MCF 10A (cell line): ENCODE measurements at regions of chr15 and their contacts with region 1.

Region 1: DNA sequence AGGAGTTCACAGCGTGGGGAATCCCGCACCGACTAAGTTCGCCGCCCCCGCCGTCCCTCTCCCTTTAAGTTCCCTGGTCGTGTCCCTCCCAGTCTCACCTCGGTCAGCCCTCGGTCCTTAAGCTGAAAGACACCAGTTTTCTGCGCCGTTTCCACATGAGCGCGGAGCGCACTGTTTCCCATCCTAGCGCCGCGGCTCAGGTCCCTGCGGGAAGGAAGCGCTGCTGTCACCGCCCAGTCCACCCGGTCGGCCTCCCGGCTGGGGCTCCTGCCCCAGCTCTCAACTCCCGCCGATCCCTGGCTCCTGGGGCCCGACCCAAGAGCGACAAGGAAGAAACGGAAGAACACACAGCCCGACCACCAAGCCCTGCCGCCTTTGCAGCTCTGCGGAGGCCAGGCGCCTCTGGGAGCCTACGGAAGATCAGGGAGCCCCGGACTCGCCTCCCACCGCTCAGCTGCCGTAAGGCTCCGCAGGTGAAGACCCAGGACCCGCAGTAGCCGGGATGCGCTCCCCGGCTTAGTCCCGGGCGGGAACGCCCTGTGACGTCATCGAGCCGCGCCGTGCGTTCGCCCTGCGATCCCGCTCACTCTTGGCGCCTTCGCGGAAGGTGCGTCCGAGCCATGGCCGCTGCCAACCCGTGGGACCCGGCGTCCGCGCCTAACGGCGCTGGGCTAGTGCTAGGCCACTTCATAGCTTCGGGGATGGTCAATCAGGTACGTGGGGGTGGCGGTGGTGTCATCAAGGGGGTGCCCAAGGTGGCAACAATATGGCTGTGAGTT is at the starts of genes HAUS2 and LRRC57:
- DNase-seq: peak; percentile 86
- H3K4me3 Mint-ChIP-seq: peak within 1 kb of the TSS; percentile 88
- H3K27ac Mint-ChIP-seq: peak within 1 kb of the TSS; percentile 96
- H3K4me1 Mint-ChIP-seq: peaks cover 34% of the 10 kb centered on the region
- H3K27me3 Mint-ChIP-seq: no peaks in the 10 kb centered on the region
- CTCF ChIP-seq: no peak
- total RNA-seq, gene HAUS2: 22.6 and 29.6 TPM in 2 replicates
- total RNA-seq, gene LRRC57: 18.3 and 24.7 TPM in 2 replicates

Region 2: DNA sequence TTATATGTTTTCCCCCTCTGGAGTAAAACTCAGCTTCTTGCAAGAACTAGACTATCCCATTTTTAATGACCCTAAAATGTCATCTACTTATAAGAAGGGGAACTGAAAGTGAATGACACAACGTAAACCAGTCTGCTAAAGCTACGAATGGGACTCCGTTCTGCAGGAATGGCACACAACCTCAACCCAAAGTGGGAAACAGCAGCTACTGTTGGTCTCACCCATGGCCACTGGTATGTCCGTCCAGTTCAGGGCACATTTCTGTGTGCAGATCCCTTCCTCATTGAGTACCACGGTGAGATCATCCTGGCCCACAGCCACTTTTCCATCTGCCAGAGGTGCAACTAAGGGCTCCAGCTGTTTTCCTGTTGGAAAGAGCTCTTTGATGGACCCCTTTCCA is 364.1 kb before region 1 on chr15:
- CTCF ChIA-PET with region 1: no interaction called
- POLR2A ChIA-PET with region 1: no interaction called
- intact Hi-C with region 1: no loop called
- DNase-seq: no peak
- H3K4me3 Mint-ChIP-seq: no peak overlapping the region
- H3K27ac Mint-ChIP-seq: no peak overlapping the region
- H3K4me1 Mint-ChIP-seq: no peaks in the 10 kb centered on the region
- H3K27me3 Mint-ChIP-seq: no peaks in the 10 kb centered on the region
- CTCF ChIP-seq: no peak

Region 3: GRCh38 chr15:42511010-42511396 is 37.4 kb before region 1 on chr15:
- CTCF ChIA-PET with region 1: no interaction called
- POLR2A ChIA-PET with region 1: interaction called, 14 read pairs
- intact Hi-C with region 1: no loop called
- DNase-seq: peak; percentile 45
- H3K4me3 Mint-ChIP-seq: no peak overlapping the region
- H3K27ac Mint-ChIP-seq: peak overlapping the region; percentile 82
- H3K4me1 Mint-ChIP-seq: peaks cover 6% of the 10 kb centered on the region
- H3K27me3 Mint-ChIP-seq: no peaks in the 10 kb centered on the region
- CTCF ChIP-seq: no peak

Region 4: GRCh38 chr15:42533246-42533645 is 15.2 kb before region 1 on chr15:
- CTCF ChIA-PET with region 1: interaction called, 3 read pairs
- POLR2A ChIA-PET with region 1: interaction called, 21 read pairs
- intact Hi-C with region 1: no loop called
- DNase-seq: no peak
- H3K4me3 Mint-ChIP-seq: no peak overlapping the region
- H3K27ac Mint-ChIP-seq: no peak overlapping the region
- H3K4me1 Mint-ChIP-seq: no peaks in the 10 kb centered on the region
- H3K27me3 Mint-ChIP-seq: no peaks in the 10 kb centered on the region
- CTCF ChIP-seq: no peak

Region 5: GRCh38 chr15:42575188-42576039 is 27.0 kb after region 1 on chr15 and contains the start of gene STARD9:
- CTCF ChIA-PET with region 1: interaction called, 4 read pairs
- POLR2A ChIA-PET with region 1: interaction called, 27 read pairs
- intact Hi-C with region 1: no loop called
- DNase-seq: peak; percentile 98
- H3K4me3 Mint-ChIP-seq: peak within 1 kb of the TSS; percentile 89
- H3K27ac Mint-ChIP-seq: peak within 1 kb of the TSS; percentile 53
- H3K4me1 Mint-ChIP-seq: peaks cover 7% of the 10 kb centered on the region
- H3K27me3 Mint-ChIP-seq: no peaks in the 10 kb centered on the region
- CTCF ChIP-seq: no peak
- total RNA-seq, gene STARD9: 2.0 and 2.9 TPM in 2 replicates

Region 6: GRCh38 chr15:42581272-42581730 is 32.9 kb after region 1 on chr15:
- CTCF ChIA-PET with region 1: interaction called, 3 read pairs
- POLR2A ChIA-PET with region 1: interaction called, 12 read pairs
- intact Hi-C with region 1: no loop called
- DNase-seq: peak; percentile 70
- H3K4me3 Mint-ChIP-seq: peak overlapping the region; percentile 73
- H3K27ac Mint-ChIP-seq: peak overlapping the region; percentile 5
- H3K4me1 Mint-ChIP-seq: peaks cover 11% of the 10 kb centered on the region
- H3K27me3 Mint-ChIP-seq: no peaks in the 10 kb centered on the region
- CTCF ChIP-seq: no peak

Region 7: DNA sequence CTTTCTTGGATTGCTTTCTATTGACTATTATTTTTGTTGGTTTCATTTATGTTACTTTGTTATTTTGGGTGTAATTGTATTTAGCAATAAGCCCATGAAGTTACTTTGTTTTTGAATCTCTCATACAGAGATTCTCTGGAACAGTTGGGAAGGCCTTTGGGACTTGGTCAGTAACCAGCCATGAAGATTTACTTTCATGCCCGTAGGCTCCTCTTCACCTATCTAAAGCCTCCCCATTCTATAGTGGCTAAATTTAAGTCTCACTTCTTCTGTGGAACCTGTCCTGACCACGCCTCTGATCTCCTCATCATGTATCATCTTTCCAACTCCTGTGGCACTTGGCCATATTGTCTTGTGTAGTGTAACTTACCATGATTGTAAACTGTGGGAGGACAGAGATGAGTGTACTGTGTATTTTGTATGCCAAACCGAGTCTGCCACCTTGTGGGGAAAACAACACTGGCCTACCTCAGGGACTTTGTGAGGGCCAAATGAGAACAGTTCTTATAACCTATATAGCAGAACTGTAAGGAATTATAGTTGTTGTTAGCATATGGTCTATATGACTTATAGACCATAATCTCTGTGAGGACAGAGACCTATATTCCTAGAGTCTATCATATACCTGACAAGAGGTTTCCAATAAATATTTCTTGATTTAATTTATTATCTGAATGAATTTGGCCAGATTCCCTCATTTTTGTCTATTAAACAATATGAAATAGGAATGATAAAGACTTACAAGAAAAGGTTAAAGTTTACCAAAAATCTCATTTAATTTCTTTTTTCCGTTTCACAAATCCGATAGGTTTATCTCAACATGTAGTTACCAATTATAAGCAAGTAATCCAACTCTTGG is 102.0 kb after region 1 on chr15:
- CTCF ChIA-PET with region 1: interaction called, 7 read pairs
- POLR2A ChIA-PET with region 1: interaction called, 5 read pairs
- intact Hi-C with region 1: loop called (anchors 1 kb)
- DNase-seq: peak; percentile 88
- H3K4me3 Mint-ChIP-seq: no peak overlapping the region
- H3K27ac Mint-ChIP-seq: no peak overlapping the region
- H3K4me1 Mint-ChIP-seq: peaks cover 6% of the 10 kb centered on the region
- H3K27me3 Mint-ChIP-seq: no peaks in the 10 kb centered on the region
- CTCF ChIP-seq: peak; percentile 72